ENCODE measurements at regions of chr2 and their contacts with region 1.

Region 1: GRCh38 chr2:10122386-10123280 is at the start of gene RRM2:
- DNase-seq: peak; percentile 94
- H3K4me3 Mint-ChIP-seq: peak within 1 kb of the TSS; percentile 99
- H3K27ac Mint-ChIP-seq: peak within 1 kb of the TSS; percentile 95
- H3K4me1 Mint-ChIP-seq: peaks cover 45% of the 10 kb centered on the region
- H3K27me3 Mint-ChIP-seq: no peaks in the 10 kb centered on the region
- total RNA-seq, gene RRM2: 374 TPM in 2 replicates

Region 2: GRCh38 chr2:9423100-9423921 is 699.3 kb before region 1 on chr2 and contains the starts of genes CPSF3 and ITGB1BP1:
- intact Hi-C with region 1: loop called (anchors 5 kb)
- DNase-seq: peak; percentile 97
- H3K4me3 Mint-ChIP-seq: peak within 1 kb of the TSS; percentile 91
- H3K27ac Mint-ChIP-seq: peak within 1 kb of the TSS; percentile 93
- H3K4me1 Mint-ChIP-seq: peaks cover 31% of the 10 kb centered on the region
- H3K27me3 Mint-ChIP-seq: no peaks in the 10 kb centered on the region
- total RNA-seq, gene CPSF3: 69.5 and 73.2 TPM in 2 replicates
- total RNA-seq, gene ITGB1BP1: 118 and 128 TPM in 2 replicates

Region 3: DNA sequence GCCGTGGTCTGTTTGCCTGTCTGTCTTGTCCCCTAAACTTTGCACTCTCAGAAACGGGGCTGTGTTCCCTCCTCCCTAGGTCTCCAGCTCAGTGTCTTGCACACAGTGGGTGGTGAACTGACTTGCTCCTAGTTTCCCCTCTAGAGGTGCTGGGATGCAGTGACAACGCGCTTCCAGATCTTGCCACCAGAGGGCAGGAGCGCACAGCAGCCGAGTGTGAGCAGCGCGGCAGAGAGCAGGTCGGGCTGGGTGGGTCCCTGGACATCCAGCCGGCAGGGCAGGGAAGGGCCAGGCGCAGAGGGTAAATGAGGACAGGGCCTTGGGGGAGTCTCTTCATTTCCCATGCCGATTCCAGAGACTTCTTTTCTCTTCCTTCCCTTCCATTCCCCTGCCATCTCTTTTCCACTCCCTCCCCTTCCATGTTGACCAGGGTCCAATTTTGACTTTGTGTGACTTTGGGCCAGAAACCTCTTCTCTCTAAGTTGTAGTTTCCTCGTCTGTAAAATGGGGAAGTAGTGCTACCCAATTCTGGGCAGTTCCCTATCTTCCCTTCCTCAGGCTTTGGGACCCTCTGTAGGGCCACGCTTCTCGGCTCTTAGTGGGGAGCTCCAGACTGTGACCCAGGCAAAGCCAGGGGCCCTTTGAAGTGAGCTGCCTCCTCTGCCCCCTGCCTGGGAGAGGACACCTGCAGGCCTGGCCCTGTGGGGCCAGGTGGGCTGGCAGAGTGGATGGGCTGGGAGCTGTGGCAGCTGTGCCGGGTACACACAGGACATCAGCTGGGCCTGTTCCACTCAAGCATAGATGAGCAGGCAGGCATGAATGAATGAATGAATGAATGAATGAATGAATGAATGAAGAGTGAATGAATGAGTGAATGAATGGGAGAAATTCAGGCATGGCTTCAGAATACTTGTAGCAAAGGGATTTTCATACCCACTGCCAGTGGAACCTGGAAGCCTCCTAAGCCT is 322.7 kb before region 1 on chr2:
- intact Hi-C with region 1: no loop called
- DNase-seq: peak; percentile 81
- H3K4me3 Mint-ChIP-seq: peak overlapping the region; percentile 72
- H3K27ac Mint-ChIP-seq: peak overlapping the region; percentile 71
- H3K4me1 Mint-ChIP-seq: peaks cover 34% of the 10 kb centered on the region
- H3K27me3 Mint-ChIP-seq: no peaks in the 10 kb centered on the region

Region 4: GRCh38 chr2:9975805-9976447 is 146.7 kb before region 1 on chr2:
- intact Hi-C with region 1: loop called (anchors 5 kb)
- DNase-seq: no peak
- H3K4me3 Mint-ChIP-seq: no peak overlapping the region
- H3K27ac Mint-ChIP-seq: peak overlapping the region; percentile 31
- H3K4me1 Mint-ChIP-seq: peaks cover 64% of the 10 kb centered on the region
- H3K27me3 Mint-ChIP-seq: peaks cover 6% of the 10 kb centered on the region

Region 5: DNA sequence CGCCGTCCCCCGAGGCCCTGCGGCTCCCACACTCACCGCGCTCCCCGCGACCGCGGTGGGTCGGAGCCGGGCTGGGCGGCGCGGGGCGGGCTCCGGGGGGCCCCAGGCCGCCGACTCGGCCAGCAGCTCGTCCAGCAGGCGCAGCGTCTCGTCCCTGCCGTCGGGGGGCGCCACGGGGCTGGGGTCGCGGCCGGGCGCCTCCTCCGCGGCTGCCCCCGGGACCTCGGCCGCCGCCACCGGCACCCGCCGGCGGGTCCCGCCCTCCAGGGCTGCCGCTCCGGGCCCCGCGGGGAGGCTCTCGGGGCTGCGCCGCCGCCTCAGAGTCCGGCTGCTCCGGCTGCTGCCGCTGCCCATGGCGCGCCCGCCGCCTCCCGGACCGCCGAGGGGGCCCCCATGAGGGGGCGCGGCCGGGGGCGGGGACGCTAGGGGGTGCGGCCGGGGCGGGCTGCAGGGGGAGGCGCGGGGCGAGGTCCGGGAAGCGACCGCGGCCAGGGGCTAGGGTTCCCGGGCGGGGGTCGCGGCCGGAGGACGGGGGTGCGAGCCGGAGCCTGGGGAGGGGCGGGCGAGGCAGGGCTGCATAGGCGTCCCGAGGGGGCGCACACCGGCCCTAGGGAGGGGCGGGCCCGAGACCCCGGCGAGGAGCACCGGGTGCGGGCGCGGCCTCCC is 42.6 kb before region 1 on chr2 and contains the start of gene CYS1:
- intact Hi-C with region 1: loop called (anchors 2 kb)
- DNase-seq: no peak
- H3K4me3 Mint-ChIP-seq: peak within 1 kb of the TSS; percentile 81
- H3K27ac Mint-ChIP-seq: peak within 1 kb of the TSS; percentile 46
- H3K4me1 Mint-ChIP-seq: peaks cover 29% of the 10 kb centered on the region
- H3K27me3 Mint-ChIP-seq: peaks cover 67% of the 10 kb centered on the region
- total RNA-seq, gene CYS1: 0.78 and 0.89 TPM in 2 replicates

Region 6: GRCh38 chr2:10157293-10157692 is 34.7 kb after region 1 on chr2:
- intact Hi-C with region 1: no loop called
- DNase-seq: no peak
- H3K4me3 Mint-ChIP-seq: no peak overlapping the region
- H3K27ac Mint-ChIP-seq: no peak overlapping the region
- H3K4me1 Mint-ChIP-seq: peaks cover 15% of the 10 kb centered on the region
- H3K27me3 Mint-ChIP-seq: no peaks in the 10 kb centered on the region

Region 7: GRCh38 chr2:10408649-10409579 is 286.3 kb after region 1 on chr2:
- intact Hi-C with region 1: loop called (anchors 1 kb)
- DNase-seq: peak; percentile 79
- H3K4me3 Mint-ChIP-seq: peak overlapping the region; percentile 76
- H3K27ac Mint-ChIP-seq: peak overlapping the region; percentile 95
- H3K4me1 Mint-ChIP-seq: peaks cover 49% of the 10 kb centered on the region
- H3K27me3 Mint-ChIP-seq: no peaks in the 10 kb centered on the region

Region 8: GRCh38 chr2:10654069-10654468 is 531.4 kb after region 1 on chr2:
- intact Hi-C with region 1: loop called (anchors 2 kb)
- DNase-seq: peak; percentile 45
- H3K4me3 Mint-ChIP-seq: peak overlapping the region; percentile 52
- H3K27ac Mint-ChIP-seq: peak overlapping the region; percentile 68
- H3K4me1 Mint-ChIP-seq: peaks cover 49% of the 10 kb centered on the region
- H3K27me3 Mint-ChIP-seq: no peaks in the 10 kb centered on the region